ENCODE measurements at regions of chr12 and their contacts with region 1.

Region 1: DNA sequence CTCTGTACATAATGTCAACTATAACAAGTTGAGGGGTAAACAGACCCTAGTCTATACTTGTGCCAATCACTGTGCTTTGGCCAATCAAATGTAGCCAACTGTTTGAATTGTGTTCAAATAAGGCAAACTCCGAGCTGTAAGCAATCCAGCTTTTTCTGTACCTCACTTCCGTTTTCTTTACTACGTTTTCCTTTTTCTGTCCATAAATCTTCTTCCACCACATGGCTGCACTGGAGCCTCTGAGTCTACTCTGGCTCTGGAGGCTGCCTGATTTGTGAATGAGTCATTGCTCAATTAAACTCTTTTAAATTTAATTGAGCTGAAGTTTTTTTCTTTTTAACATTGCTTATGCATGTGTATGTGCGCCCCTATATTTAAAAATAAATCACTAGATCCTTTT is 29.7 kb downstream of the CLEC1A start:
- DNase-seq: no peak
- ATAC-seq: peak in 4 of 8 donors; percentile 39 to 46 (median 41)
- H3K4me3 ChIP-seq: peak overlapping the region in 1 of 10 donors; percentile 3
- H3K27ac ChIP-seq: peak overlapping the region in 9 of 10 donors; percentile 46 to 88 (median 81)
- H3K4me1 ChIP-seq: peaks cover 0 to 36% (median 17%) of the 10 kb centered on the region in 9 donors
- H3K27me3 ChIP-seq: no peaks in the 10 kb centered on the region
- CTCF ChIP-seq: no peak

Region 2: GRCh38 chr12:10098791-10099190 is 29.7 kb after region 1 on chr12 and contains the start of gene CLEC1A:
- intact Hi-C with region 1: loop called in 1 of 10 experiments (anchors 2 kb)
- DNase-seq: peak; percentile 25 to 56
- ATAC-seq: peak; percentile 62 to 92 (median 85)
- H3K4me3 ChIP-seq: peak within 1 kb of the TSS in 9 of 10 donors; percentile 17 to 55 (median 40)
- H3K27ac ChIP-seq: peak within 1 kb of the TSS; percentile 49 to 85 (median 72)
- H3K4me1 ChIP-seq: peaks cover 0 to 50% (median 28%) of the 10 kb centered on the region in 9 donors
- H3K27me3 ChIP-seq: no peaks in the 10 kb centered on the region
- CTCF ChIP-seq: no peak
- total RNA-seq, gene CLEC1A: 1.2 to 6.6 (median 2.7) TPM